ENCODE measurements at regions of chr3 and their contacts with region 1.

Region 1: DNA sequence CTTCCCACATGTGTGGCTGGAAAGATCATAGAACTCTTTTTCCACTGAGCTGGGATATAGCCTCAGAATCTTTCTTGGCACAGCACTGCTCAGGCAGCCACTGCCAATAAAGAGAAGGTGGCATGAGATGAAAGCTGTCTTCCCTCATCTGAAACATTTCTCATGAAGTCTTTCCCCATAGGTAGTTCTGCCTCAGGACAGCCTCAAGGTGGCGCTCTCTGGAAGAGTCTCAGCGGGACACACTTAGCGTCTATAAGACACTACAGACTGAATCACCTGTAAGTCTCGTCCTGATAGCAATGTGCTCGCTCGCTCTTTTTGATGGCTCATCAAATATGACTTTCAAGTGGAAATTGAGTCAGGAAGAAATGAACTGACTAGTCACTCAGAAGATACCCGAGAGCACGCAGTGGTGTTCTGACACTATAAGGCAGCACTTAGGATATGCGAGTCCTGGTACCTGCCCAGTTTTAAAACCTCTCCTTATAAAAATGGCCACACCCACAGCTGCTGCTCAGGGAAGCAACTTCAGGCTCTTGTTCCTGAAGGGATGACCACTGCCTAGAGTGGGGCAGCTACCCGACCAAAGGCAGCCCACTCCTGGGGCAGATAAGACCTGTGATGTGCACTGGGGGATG is 269.5 kb downstream of the SUCLG2 start:
- DNase-seq: peak; percentile 18 to 48 (median 43)
- H3K4me3 ChIP-seq: no peak overlapping the region
- H3K27ac ChIP-seq: no peak overlapping the region
- H3K4me1 ChIP-seq: peaks cover 0 to 6% (median 0%) of the 10 kb centered on the region in 4 experiments
- H3K27me3 ChIP-seq: peaks cover 0 to 7% (median 0%) of the 10 kb centered on the region in 5 experiments

Region 2: GRCh38 chr3:67437086-67437485 is 52.2 kb after region 1 on chr3:
- CTCF ChIA-PET with region 1: no interaction called
- POLR2A ChIA-PET with region 1: interaction called, 11 read pairs
- DNase-seq: no peak
- H3K4me3 ChIP-seq: no peak overlapping the region
- H3K27ac ChIP-seq: no peak overlapping the region
- H3K4me1 ChIP-seq: no peaks in the 10 kb centered on the region
- H3K27me3 ChIP-seq: no peaks in the 10 kb centered on the region

Region 3: DNA sequence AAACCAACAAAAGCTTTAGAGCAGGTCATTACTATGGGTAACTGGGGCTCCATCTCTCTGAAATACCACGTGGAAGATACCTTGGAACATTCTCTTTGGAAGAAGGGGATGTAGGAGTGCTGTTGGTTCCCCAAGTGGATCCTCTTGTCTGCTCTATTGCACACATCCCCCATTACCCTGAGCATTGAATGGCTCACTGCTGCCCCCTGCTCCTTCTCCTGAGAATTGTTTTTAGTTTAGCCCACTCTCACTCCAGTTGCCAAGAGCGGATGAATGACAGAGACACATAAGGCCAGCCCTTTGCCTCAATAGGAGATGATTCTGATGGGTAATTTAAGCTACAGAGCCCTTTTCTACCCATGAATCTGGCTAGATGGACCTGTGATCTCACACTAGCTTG is 405.2 kb after region 1 on chr3:
- CTCF ChIA-PET with region 1: interaction called, 54 read pairs
- POLR2A ChIA-PET with region 1: no interaction called
- DNase-seq: peak; percentile 30 to 63 (median 45)
- H3K4me3 ChIP-seq: no peak overlapping the region
- H3K27ac ChIP-seq: no peak overlapping the region
- H3K4me1 ChIP-seq: no peaks in the 10 kb centered on the region
- H3K27me3 ChIP-seq: peaks cover 0 to 14% (median 4%) of the 10 kb centered on the region in 5 experiments

Measured in common myeloid progenitor, CD34-positive (primary cell).